Activated B cell treated with CpG ODN at 0.5 μM for 24 hours (primary cell): ENCODE measurements at regions of chr10 and their contacts with region 1.

Region 1: DNA sequence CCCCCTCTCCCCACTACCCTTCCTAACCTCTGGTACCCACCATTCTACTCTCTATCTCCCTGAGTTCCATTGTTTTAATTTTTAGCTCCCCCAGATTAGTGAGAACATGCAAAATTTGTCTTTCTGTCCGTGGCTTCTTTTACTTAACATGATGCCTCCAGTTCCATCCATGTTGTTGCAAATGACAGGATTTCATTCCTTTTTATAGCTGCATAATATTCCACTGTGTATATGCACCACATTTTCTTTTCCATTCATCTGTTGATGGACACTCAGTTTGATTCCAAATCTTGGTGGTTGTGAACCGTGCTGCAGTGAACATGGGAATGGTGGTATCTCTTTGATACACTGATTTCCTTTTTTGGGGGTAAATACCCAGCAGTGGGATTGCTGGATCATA is 22.0 kb downstream of the DENND10 start:
- DNase-seq: no peak
- ATAC-seq: no peak
- H3K4me3 Mint-ChIP-seq: no peak overlapping the region
- H3K27ac Mint-ChIP-seq: no peak overlapping the region
- H3K4me1 Mint-ChIP-seq: peaks cover 6% of the 10 kb centered on the region
- H3K27me3 Mint-ChIP-seq: no peaks in the 10 kb centered on the region
- CTCF ChIP-seq: no peak

Region 2: GRCh38 chr10:119115896-119116295 is 10.0 kb before region 1 on chr10:
- CTCF ChIA-PET with region 1: no interaction called
- POLR2A ChIA-PET with region 1: interaction called, 14 read pairs
- intact Hi-C with region 1: no loop called
- DNase-seq: no peak
- ATAC-seq: no peak
- H3K4me3 Mint-ChIP-seq: no peak overlapping the region
- H3K27ac Mint-ChIP-seq: no peak overlapping the region
- H3K4me1 Mint-ChIP-seq: peaks cover 4% of the 10 kb centered on the region
- H3K27me3 Mint-ChIP-seq: no peaks in the 10 kb centered on the region
- CTCF ChIP-seq: no peak